ENCODE measurements at regions of chr22 and their contacts with region 1.

Region 1: DNA sequence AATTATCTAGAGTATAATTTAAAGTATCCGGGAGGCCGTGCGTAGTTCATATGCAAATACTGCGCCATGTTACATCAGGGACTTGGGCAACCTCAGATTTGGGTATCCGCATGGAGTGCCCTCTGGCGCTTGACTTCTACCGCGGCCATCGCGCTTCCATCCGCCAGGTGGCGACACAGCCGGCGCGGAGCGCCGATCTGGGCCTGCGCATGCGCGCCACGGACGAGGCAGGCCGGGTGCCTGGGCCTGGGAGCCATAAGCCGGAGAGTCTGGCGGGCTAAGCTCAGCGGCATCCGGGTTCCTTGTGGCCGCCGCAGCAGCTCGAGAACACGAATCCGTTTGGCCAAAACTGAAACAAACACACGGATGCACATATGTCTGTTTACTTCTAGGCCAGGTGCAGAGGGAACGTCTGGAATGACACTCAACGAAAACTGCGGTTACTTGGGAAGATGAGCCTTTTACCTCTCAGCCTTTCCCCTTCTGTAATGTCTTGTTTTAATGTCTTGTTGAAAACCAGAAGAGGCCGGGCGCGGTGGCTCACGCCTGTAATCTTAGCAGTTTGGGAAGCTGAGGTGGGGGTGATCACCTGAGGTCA is 21.9 kb downstream of the SNU13 start:
- DNase-seq: peak; percentile 85 to 96 (median 92)
- ATAC-seq: peak; percentile 91 to 96 (median 94)
- H3K4me3 ChIP-seq: peak overlapping the region; percentile 48 to 49
- H3K4me3 Mint-ChIP-seq: peak overlapping the region; percentile 69 to 85 (median 74)
- H3K27ac ChIP-seq: peak overlapping the region; percentile 90
- H3K27ac Mint-ChIP-seq: peak overlapping the region; percentile 94 to 98
- H3K4me1 ChIP-seq: peaks cover 0 to 20% of the 10 kb centered on the region in 2 experiments
- H3K4me1 Mint-ChIP-seq: peaks cover 12 to 19% (median 13%) of the 10 kb centered on the region in 3 donors
- H3K27me3 ChIP-seq: no peaks in the 10 kb centered on the region
- H3K27me3 Mint-ChIP-seq: no peaks in the 10 kb centered on the region

Region 2: DNA sequence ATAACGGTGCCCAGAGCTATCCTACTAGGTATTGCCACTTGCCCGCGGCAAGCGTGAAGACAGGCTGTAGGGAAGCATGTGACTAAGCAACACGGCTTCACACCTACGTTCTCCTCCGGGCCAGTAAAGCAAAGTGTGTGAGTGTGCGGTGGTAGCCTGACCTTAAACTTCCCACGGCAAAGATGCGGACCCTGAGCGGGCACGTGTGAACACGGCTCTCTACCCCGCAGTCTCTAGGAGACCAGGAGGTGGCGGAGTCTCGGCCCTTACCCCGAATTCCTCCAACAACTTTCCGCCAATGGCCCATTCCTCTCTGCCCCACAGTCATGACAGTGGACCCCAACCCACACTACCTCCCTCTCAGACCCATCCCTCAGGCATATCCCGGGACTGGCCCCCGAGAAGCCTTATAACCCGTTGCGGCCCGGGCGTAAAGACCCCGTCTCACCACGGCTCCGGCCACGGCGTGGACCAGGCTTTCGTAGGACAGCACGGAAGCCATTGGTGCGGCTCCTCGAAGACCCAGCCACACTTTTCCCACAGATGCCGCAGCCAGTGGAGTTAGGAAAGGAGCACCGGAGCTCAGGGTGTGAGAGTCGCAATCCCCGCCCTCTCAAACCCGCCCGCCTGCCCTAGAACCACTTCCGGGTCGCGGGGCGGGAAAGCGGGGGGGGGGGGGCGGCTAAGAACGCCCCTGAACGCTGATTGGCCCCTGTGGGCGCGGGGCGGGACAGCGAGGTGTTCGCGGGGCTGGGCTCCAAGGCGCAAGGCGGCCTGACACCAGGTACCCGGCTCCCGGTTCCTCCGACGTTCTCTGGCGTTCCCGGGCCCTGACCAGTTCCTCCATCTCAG is 847.8 kb before region 1 on chr22 and contains the start of gene SLC25A17:
- CTCF ChIA-PET with region 1: no interaction called
- POLR2A ChIA-PET with region 1: interaction called in 1 of 2 experiments, 16 read pairs
- DNase-seq: peak; percentile 73 to 92 (median 85)
- ATAC-seq: peak; percentile 92 to 97 (median 94)
- H3K4me3 ChIP-seq: peak within 1 kb of the TSS; percentile 79 to 84
- H3K4me3 Mint-ChIP-seq: peak within 1 kb of the TSS; percentile 70 to 97 (median 94)
- H3K27ac ChIP-seq: peak within 1 kb of the TSS; percentile 32
- H3K27ac Mint-ChIP-seq: peak within 1 kb of the TSS; percentile 80 to 90
- H3K4me1 ChIP-seq: peaks cover 11 to 23% of the 10 kb centered on the region in 2 experiments
- H3K4me1 Mint-ChIP-seq: peaks cover 33 to 39% (median 39%) of the 10 kb centered on the region in 3 donors
- H3K27me3 ChIP-seq: no peaks in the 10 kb centered on the region
- H3K27me3 Mint-ChIP-seq: no peaks in the 10 kb centered on the region
- total RNA-seq, gene SLC25A17: 8.9 to 14.2 (median 12.7) TPM

Region 3: GRCh38 chr22:40990430-40990829 is 676.3 kb before region 1 on chr22:
- CTCF ChIA-PET with region 1: no interaction called
- POLR2A ChIA-PET with region 1: no interaction called
- DNase-seq: no peak
- ATAC-seq: no peak
- H3K4me3 ChIP-seq: no peak overlapping the region
- H3K4me3 Mint-ChIP-seq: no peak overlapping the region
- H3K27ac ChIP-seq: no peak overlapping the region
- H3K27ac Mint-ChIP-seq: no peak overlapping the region
- H3K4me1 ChIP-seq: no peaks in the 10 kb centered on the region
- H3K4me1 Mint-ChIP-seq: no peaks in the 10 kb centered on the region
- H3K27me3 ChIP-seq: peaks cover 0 to 24% of the 10 kb centered on the region in 2 experiments
- H3K27me3 Mint-ChIP-seq: peaks cover 20 to 23% of the 10 kb centered on the region in 2 donors

Region 4: GRCh38 chr22:41688365-41689211 is 21.8 kb after region 1 on chr22 and contains the start of gene SNU13:
- CTCF ChIA-PET with region 1: interaction called in 1 of 2 experiments, 12 read pairs
- POLR2A ChIA-PET with region 1: no interaction called
- DNase-seq: peak; percentile 85 to 97 (median 91)
- ATAC-seq: peak; percentile 95 to 98 (median 98)
- H3K4me3 ChIP-seq: peak within 1 kb of the TSS; percentile 99 to 100
- H3K4me3 Mint-ChIP-seq: peak within 1 kb of the TSS; percentile 91 to 97 (median 96)
- H3K27ac ChIP-seq: peak within 1 kb of the TSS; percentile 99
- H3K27ac Mint-ChIP-seq: peak within 1 kb of the TSS; percentile 94 to 98
- H3K4me1 ChIP-seq: peaks cover 9 to 36% of the 10 kb centered on the region in 2 experiments
- H3K4me1 Mint-ChIP-seq: peaks cover 34 to 42% (median 39%) of the 10 kb centered on the region in 3 donors
- H3K27me3 ChIP-seq: no peaks in the 10 kb centered on the region
- H3K27me3 Mint-ChIP-seq: no peaks in the 10 kb centered on the region
- total RNA-seq, gene SNU13: 108 to 145 (median 122) TPM

Region 5: DNA sequence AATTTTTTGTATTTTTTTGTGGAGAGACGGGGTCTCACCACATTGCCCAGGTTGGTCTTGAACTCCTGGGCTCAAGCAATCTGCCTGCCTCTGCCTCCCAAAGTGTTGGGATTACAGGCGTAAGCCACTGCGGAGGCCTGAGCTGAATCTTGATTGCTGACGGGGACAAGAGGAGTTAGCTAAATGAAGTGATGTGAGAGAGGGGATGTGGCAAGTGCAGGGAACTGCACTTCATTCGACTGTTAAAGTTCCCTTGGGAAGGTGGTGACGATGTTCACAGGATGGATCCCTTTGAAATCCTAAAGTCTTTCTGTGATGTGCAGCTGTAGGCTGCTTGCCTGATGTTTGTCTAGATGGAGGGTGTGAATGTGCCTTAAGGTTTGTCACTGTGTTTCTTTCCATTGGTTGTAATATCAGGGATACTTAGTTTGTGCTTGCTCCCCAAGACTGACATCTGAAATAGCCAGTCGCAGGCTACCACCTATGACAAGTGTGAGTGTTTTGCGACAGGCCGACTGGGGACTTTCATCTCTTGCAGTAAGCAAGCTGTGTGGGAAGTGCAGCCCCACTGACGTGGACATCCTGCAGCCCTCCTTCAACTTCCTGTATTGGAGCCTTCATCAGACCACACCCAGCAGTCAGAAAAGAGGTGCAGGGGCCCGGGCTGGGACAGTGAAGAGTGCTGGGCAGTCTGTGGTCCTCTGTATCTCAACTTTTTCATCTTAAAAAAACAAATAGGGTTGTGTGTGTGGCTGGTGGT is 114.2 kb after region 1 on chr22:
- CTCF ChIA-PET with region 1: interaction called in 1 of 2 experiments, 15 read pairs
- POLR2A ChIA-PET with region 1: interaction called in 1 of 2 experiments, 3 read pairs
- DNase-seq: peak; percentile 66 to 100 (median 96)
- ATAC-seq: peak; percentile 96 to 97 (median 96)
- H3K4me3 ChIP-seq: peak overlapping the region; percentile 61 to 78
- H3K4me3 Mint-ChIP-seq: peak overlapping the region; percentile 84 to 90 (median 84)
- H3K27ac ChIP-seq: peak overlapping the region; percentile 95
- H3K27ac Mint-ChIP-seq: peak overlapping the region; percentile 100
- H3K4me1 ChIP-seq: peaks cover 27 to 47% of the 10 kb centered on the region in 2 experiments
- H3K4me1 Mint-ChIP-seq: peaks cover 49 to 58% (median 56%) of the 10 kb centered on the region in 3 donors
- H3K27me3 ChIP-seq: peaks cover 0 to 6% of the 10 kb centered on the region in 2 experiments
- H3K27me3 Mint-ChIP-seq: no peaks in the 10 kb centered on the region

Region 6: DNA sequence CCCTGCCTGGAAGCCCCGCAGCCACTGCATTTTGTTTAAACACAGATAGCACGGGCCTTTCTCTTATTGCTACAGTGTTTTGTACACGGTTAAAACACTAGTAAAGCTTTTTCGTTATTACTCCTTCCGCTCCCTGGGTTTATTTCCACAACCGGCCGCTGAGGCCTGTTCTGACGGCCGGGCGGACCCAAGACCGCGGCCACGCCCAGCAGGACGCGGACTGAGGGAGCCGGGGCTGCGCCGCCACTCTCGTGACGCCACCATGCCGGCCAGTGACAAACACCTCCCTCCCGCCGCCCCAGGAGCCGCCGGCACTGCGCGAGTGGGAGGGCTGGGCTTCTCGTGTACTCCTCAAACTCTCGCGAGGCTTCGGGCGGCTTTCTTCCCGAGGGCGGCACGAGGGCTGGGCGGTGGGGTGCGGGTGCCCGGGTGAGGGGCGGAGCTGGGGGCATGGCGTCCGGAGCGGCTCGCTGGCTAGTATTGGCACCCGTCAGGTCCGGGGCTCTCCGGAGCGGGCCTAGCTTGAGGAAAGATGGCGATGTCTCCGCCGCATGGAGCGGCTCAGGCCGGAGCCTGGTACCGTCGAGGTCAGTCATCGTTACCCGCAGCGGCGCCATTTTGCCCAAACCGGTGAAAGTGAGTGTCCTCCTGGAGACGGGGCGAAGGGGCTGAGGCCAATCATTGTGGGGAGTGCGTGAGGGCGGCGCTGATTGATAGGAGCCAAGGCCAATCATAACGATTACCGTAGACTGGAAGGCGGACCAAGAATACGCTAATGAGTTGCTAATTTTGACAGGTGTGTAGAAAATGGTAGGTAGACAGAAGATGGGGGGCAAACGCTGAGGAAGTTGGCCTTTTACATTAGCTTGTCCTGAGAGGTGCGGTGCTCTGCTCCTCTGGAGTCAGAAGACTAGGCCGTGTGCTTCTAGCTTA is 412.8 kb after region 1 on chr22 and contains the start of gene SMDT1:
- CTCF ChIA-PET with region 1: interaction called in 1 of 2 experiments, 3 read pairs
- POLR2A ChIA-PET with region 1: interaction called in 1 of 2 experiments, 10 read pairs
- DNase-seq: peak; percentile 95 to 100 (median 98)
- ATAC-seq: peak; percentile 91 to 93 (median 92)
- H3K4me3 ChIP-seq: peak within 1 kb of the TSS; percentile 80 to 82
- H3K4me3 Mint-ChIP-seq: peak within 1 kb of the TSS; percentile 94 to 96 (median 95)
- H3K27ac ChIP-seq: peak within 1 kb of the TSS; percentile 98
- H3K27ac Mint-ChIP-seq: peak within 1 kb of the TSS; percentile 93 to 98
- H3K4me1 ChIP-seq: peaks cover 15 to 43% of the 10 kb centered on the region in 2 experiments
- H3K4me1 Mint-ChIP-seq: peaks cover 38 to 52% (median 45%) of the 10 kb centered on the region in 3 donors
- H3K27me3 ChIP-seq: no peaks in the 10 kb centered on the region
- H3K27me3 Mint-ChIP-seq: no peaks in the 10 kb centered on the region
- total RNA-seq, gene SMDT1: 101 to 176 (median 114) TPM